Activated T-helper 1 cell treated with anti-CD3 and anti-CD28 coated beads, Interleukin-12 subunit alpha, Interleukin-12 subunit beta, Interleukin-2, Interleukin-4 antibody, amounts not matched to agents 30 ng/mL and 10 ng/mL and 1 ng/mL, durations not matched to agents 14 hours and 24 hours and 36 hours (primary cell): ENCODE measurements at regions of chr15 and their contacts with region 1.

Region 1: DNA sequence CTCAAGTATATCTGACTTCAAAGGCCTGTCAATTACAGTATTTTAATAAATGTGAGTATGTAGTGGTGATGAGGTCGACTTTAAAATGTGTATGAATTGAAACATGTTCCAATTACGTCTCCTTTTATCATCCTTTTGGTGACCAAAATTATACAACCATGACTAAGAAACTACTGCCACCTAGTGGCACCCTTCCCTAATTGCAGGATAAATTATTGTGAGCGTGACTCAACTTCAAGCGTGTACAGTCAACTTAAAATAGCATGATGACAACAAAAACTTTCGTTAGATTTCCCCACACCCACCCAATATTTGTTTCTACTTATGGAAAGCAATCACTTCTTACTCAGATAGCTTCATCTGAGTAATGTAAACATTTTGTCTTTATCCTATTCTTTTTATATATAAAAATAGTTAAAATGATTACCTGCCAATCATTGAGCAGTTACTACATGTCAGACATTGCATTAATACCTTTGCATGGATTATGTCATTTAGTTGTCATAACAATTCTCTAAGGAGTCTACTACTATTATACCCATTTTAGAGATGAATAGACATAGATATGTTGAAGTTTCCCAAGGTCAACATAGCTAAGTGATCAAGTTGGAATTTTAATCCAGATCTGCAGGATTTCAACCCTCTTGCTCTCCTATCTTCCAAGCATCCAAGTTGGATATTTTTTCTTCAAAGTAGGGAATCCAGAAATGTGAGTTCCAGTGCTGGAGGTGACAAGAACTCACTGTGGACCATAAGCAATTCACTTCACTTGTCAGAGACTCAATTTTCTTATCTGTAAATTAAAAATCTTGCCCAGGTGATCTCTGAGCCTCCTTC is 106.0 kb downstream of the MEX3B start:
- DNase-seq: no peak
- H3K4me3 Mint-ChIP-seq: no peak overlapping the region
- H3K27ac Mint-ChIP-seq: no peak overlapping the region
- H3K4me1 Mint-ChIP-seq: no peaks in the 10 kb centered on the region
- H3K27me3 Mint-ChIP-seq: peaks cover 7% of the 10 kb centered on the region

Region 2: GRCh38 chr15:81410318-81410753 is 529.5 kb before region 1 on chr15:
- intact Hi-C with region 1: loop called (anchors 2 kb)
- DNase-seq: peak; percentile 19
- H3K4me3 Mint-ChIP-seq: no peak overlapping the region
- H3K27ac Mint-ChIP-seq: no peak overlapping the region
- H3K4me1 Mint-ChIP-seq: peaks cover 13% of the 10 kb centered on the region
- H3K27me3 Mint-ChIP-seq: peaks cover 21% of the 10 kb centered on the region

Region 3: GRCh38 chr15:82093774-82094211 is 154.0 kb after region 1 on chr15:
- intact Hi-C with region 1: no loop called
- DNase-seq: no peak
- H3K4me3 Mint-ChIP-seq: no peak overlapping the region
- H3K27ac Mint-ChIP-seq: no peak overlapping the region
- H3K4me1 Mint-ChIP-seq: no peaks in the 10 kb centered on the region
- H3K27me3 Mint-ChIP-seq: peaks cover 6% of the 10 kb centered on the region